IMR-90 (cell line): ENCODE measurements at regions of chr1 and their contacts with region 1.

Region 1: DNA sequence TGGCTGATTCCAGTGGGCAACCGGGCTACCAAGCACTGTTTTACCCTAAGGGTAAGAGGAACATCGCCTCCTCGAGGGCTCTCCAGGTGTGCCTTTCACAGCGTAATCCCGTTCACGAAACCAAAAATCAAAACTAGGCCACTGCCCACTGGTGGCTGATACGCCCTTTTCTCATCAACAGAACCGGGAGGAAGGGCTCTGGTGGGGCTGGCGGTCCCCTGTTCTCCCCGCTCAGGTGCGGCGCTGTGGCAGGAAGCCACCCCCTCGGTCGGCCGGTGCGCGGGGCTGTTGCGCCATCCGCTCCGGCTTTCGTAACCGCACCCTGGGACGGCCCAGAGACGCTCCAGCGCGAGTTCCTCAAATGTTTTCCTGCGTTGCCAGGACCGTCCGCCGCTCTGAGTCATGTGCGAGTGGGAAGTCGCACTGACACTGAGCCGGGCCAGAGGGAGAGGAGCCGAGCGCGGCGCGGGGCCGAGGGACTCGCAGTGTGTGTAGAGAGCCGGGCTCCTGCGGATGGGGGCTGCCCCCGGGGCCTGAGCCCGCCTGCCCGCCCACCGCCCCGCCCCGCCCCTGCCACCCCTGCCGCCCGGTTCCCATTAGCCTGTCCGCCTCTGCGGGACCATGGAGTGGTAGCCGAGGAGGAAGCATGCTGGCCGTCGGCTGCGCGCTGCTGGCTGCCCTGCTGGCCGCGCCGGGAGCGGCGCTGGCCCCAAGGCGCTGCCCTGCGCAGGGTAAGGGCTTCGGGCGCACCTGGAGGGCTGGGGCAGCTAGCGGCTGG is at the start of gene IL6R:
- DNase-seq: peak; percentile 93
- ATAC-seq: peak; percentile 80
- H3K4me3 ChIP-seq: peak within 1 kb of the TSS; percentile 72
- H3K27ac ChIP-seq: peak within 1 kb of the TSS; percentile 88
- H3K4me1 ChIP-seq: peaks cover 21% of the 10 kb centered on the region
- H3K27me3 ChIP-seq: peaks cover 12% of the 10 kb centered on the region
- CTCF ChIP-seq: peak; percentile 42
- POLR2A ChIP-seq: peak; percentile 91
- RAD21 ChIP-seq: peak; percentile 48
- total RNA-seq, gene IL6R: 6.1 and 9.5 TPM in 2 replicates

Region 2: GRCh38 chr1:154256686-154257085 is 148.5 kb before region 1 on chr1:
- CTCF ChIA-PET with region 1: no interaction called
- POLR2A ChIA-PET with region 1: no interaction called
- dilution Hi-C with region 1: no loop called
- in situ Hi-C with region 1: no loop called
- intact Hi-C with region 1: no loop called
- DNase-seq: no peak
- ATAC-seq: peak; percentile 44; the same call in 1 of the 2 replicates
- H3K4me3 ChIP-seq: no peak overlapping the region
- H3K27ac ChIP-seq: no peak overlapping the region
- H3K4me1 ChIP-seq: no peaks in the 10 kb centered on the region
- H3K27me3 ChIP-seq: no peaks in the 10 kb centered on the region
- CTCF ChIP-seq: no peak
- POLR2A ChIP-seq: no peak
- RAD21 ChIP-seq: no peak

Region 3: GRCh38 chr1:154352581-154353459 is 52.4 kb before region 1 on chr1:
- CTCF ChIA-PET with region 1: interaction called, 3 read pairs
- POLR2A ChIA-PET with region 1: no interaction called
- dilution Hi-C with region 1: no loop called
- in situ Hi-C with region 1: no loop called
- intact Hi-C with region 1: loop called (anchors 1 kb)
- DNase-seq: peak; percentile 31
- ATAC-seq: peak; percentile 78
- H3K4me3 ChIP-seq: peak overlapping the region; percentile 4; the same call in 1 of the 2 replicates
- H3K27ac ChIP-seq: peak overlapping the region; percentile 26; the same call in 1 of the 2 replicates
- H3K4me1 ChIP-seq: peaks cover 10% of the 10 kb centered on the region; the same call in 1 of the 2 replicates
- H3K27me3 ChIP-seq: peaks cover 2% of the 10 kb centered on the region
- CTCF ChIP-seq: no peak
- POLR2A ChIP-seq: no peak
- RAD21 ChIP-seq: no peak

Region 4: GRCh38 chr1:154431586-154432373 is 26.6 kb after region 1 on chr1:
- CTCF ChIA-PET with region 1: no interaction called
- POLR2A ChIA-PET with region 1: no interaction called
- dilution Hi-C with region 1: no loop called
- in situ Hi-C with region 1: no loop called
- intact Hi-C with region 1: loop called (anchors 1 kb)
- DNase-seq: peak; percentile 99
- ATAC-seq: peak; percentile 85
- H3K4me3 ChIP-seq: no peak overlapping the region
- H3K27ac ChIP-seq: peak overlapping the region; percentile 4; the same call in 1 of the 2 replicates
- H3K4me1 ChIP-seq: peaks cover 26% of the 10 kb centered on the region
- H3K27me3 ChIP-seq: 0 out of 2 replicates have a peak, but pooled peaks cover 4% of the 10 kb centered on the region
- CTCF ChIP-seq: no peak
- POLR2A ChIP-seq: no peak
- RAD21 ChIP-seq: peak; percentile 15; the same call in 1 of the 2 replicates

Region 5: GRCh38 chr1:154463512-154463990 is 58.4 kb after region 1 on chr1:
- CTCF ChIA-PET with region 1: no interaction called
- POLR2A ChIA-PET with region 1: no interaction called
- dilution Hi-C with region 1: no loop called
- in situ Hi-C with region 1: no loop called
- intact Hi-C with region 1: loop called (anchors 5 kb)
- DNase-seq: no peak
- ATAC-seq: peak; percentile 40
- H3K4me3 ChIP-seq: no peak overlapping the region
- H3K27ac ChIP-seq: peak overlapping the region; percentile 86; the same call in 1 of the 2 replicates
- H3K4me1 ChIP-seq: peaks cover 8% of the 10 kb centered on the region
- H3K27me3 ChIP-seq: no peaks in the 10 kb centered on the region; the same call in 1 of the 2 replicates
- CTCF ChIP-seq: no peak
- POLR2A ChIP-seq: no peak
- RAD21 ChIP-seq: no peak

Region 6: DNA sequence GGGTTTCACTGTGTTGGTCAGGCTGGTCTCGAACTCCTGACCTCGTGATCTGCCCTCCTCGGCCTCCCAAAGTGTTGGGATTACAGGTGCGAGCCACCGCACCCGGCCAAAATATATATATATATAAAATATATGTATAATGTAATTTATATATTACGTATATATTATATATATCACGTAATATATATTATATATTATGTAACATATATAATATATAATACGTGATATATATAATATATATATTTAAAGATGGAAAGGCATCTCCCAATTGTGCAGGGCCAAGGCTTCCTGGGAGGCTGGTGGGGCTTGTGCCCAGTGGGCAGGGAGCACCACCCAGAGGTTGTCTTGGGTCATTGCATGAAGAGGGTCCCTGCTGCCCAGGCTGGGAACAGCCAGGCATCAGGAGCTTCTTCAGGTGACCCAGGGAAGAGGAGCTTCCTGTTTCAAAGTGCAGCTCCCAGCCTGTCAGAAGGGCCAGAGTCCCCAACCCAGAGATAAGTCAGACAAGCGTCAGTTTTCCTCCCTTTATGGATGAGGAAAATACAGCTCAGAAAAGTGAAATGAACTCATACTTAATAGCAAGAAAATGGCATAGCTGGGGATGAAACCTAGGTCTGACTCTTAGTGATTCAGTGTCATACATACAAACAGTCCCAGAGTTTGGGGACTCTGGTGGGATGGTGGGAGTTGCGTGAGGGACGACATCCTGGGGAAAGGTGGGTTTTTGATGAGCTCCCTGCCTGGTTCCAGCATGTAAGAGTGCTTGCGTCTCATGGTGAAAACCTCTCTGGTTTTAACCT is 141.3 kb after region 1 on chr1:
- CTCF ChIA-PET with region 1: no interaction called
- POLR2A ChIA-PET with region 1: no interaction called
- dilution Hi-C with region 1: no loop called
- in situ Hi-C with region 1: no loop called
- intact Hi-C with region 1: loop called (anchors 5 kb)
- DNase-seq: peak; percentile 58
- ATAC-seq: peak; percentile 97
- H3K4me3 ChIP-seq: no peak overlapping the region
- H3K27ac ChIP-seq: no peak overlapping the region
- H3K4me1 ChIP-seq: no peaks in the 10 kb centered on the region
- H3K27me3 ChIP-seq: peaks cover 32% of the 10 kb centered on the region
- CTCF ChIP-seq: peak; percentile 79
- POLR2A ChIP-seq: no peak
- RAD21 ChIP-seq: peak; percentile 89